ENCODE measurements at regions of chr20 and their contacts with region 1.

Region 1: DNA sequence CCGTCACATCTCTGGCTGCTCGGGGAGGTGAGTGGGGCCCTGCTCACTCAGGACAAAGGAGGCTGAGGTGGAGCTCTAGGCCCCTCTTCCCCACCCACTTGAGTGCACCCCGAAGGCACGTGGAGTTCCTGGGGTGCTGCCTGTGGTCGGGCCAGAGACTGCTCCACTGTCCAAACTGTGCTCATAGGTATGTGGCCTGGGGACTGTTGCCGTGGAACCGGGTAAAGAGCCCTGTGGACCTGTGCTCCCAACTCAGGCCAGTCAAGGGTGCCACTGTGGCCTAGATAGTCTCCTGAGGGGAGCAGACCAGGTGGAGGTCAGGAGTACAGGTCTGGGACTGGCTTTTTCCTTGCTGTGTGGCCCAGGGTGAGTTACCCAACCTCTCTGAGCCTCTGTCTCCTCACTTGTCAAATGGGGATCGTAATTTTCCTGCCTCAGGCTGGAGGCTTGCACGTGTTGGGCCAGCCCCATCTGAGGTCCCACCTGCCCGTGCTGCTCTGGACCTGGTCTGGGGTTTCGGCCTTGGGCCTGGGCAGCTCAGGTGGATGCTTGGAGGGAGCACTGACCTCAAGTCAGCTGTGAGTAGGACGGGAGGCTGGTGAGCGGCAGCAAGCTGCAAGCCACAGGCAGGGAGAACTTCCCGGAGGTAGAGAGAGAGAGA is 12.4 kb upstream of the NPBWR2 start:
- DNase-seq: no peak
- H3K4me3 Mint-ChIP-seq: peak overlapping the region; percentile 51
- H3K27ac Mint-ChIP-seq: peak overlapping the region; percentile 44
- H3K4me1 Mint-ChIP-seq: peaks cover 10% of the 10 kb centered on the region
- H3K27me3 Mint-ChIP-seq: peaks cover 13% of the 10 kb centered on the region

Region 2: DNA sequence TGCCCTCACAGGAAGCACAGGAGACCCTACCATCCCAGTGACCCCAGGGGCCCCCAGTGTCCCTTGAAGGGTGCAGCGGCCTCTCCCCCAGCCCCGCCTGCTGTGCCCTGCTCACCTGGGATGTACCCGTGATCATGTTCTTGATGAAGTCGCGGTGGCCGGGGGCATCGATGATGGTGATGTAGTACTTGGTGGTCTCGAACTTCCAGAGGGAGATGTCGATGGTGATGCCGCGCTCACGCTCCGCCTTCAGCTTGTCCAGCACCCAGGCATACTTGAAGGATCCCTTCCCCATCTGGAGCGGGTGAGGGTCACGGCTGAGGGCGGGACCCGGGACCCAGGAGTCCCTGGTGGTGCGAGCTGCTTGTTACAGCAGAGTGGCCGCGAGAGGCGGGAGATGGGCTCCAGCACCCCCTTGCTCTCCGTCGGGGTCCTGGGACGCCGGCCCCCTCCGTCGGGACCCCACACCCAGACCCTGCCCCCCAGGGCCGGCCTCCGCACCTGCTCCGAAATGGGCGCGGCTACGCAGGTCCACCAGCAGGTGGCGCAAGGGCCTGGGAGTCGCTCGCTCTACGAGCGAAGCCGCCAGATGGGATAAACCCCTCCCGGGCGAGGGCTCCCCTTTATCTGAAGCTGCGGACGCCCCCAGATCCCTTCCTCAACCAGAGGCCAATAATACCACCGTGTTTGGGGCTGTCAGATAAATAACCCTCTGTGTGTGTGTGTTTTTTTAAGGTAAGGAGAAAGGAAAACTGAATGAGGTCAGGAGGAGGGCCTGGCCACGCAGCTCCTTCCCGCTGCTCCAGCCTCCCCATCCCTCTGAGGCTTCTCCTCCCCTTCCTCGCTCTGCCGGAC is 623.8 kb before region 1 on chr20:
- intact Hi-C with region 1: loop called (anchors 1 kb)
- DNase-seq: peak; percentile 54
- H3K4me3 Mint-ChIP-seq: no peak overlapping the region
- H3K27ac Mint-ChIP-seq: no peak overlapping the region
- H3K4me1 Mint-ChIP-seq: no peaks in the 10 kb centered on the region
- H3K27me3 Mint-ChIP-seq: peaks cover 16% of the 10 kb centered on the region

Region 3: DNA sequence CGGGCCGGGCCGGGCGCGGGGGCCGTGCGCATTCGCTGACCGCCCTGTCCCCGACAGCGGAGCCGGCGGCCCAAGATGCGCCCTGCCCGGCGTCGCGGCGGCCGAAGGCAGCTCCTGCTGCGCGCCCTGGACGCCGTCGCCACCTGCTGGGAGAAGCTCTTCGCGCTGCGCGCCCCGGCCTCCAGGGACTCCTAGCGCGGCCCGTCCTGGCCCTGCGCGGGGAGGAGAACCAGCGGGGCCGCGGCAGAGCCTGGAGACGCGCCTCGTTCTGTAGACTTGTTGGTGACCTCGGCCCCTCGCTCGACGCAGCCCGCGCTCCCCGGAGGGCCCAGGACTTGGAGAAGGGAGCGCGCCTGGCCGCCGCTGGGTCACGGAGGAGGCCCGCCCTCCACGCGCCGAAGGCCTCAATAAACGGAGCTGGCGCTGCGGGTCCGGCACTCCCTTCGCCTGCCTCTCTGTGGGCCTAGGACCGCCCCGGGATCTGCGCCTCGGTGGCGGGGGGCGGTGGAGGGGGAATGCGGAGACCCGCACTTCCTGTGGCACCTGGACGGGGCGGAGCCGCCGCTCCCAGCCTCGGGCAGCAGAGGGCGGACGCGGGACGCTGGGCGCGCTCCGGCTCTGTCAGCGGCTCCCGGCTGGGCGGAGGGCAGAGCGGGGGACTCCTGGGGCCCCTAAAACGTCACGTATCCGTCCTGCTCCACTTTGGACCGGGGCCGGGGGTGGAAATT is 81.1 kb before region 1 on chr20:
- intact Hi-C with region 1: loop called (anchors 1 kb)
- DNase-seq: peak; percentile 77
- H3K4me3 Mint-ChIP-seq: peak overlapping the region; percentile 73
- H3K27ac Mint-ChIP-seq: no peak overlapping the region
- H3K4me1 Mint-ChIP-seq: peaks cover 51% of the 10 kb centered on the region
- H3K27me3 Mint-ChIP-seq: peaks cover 3% of the 10 kb centered on the region

Region 4: DNA sequence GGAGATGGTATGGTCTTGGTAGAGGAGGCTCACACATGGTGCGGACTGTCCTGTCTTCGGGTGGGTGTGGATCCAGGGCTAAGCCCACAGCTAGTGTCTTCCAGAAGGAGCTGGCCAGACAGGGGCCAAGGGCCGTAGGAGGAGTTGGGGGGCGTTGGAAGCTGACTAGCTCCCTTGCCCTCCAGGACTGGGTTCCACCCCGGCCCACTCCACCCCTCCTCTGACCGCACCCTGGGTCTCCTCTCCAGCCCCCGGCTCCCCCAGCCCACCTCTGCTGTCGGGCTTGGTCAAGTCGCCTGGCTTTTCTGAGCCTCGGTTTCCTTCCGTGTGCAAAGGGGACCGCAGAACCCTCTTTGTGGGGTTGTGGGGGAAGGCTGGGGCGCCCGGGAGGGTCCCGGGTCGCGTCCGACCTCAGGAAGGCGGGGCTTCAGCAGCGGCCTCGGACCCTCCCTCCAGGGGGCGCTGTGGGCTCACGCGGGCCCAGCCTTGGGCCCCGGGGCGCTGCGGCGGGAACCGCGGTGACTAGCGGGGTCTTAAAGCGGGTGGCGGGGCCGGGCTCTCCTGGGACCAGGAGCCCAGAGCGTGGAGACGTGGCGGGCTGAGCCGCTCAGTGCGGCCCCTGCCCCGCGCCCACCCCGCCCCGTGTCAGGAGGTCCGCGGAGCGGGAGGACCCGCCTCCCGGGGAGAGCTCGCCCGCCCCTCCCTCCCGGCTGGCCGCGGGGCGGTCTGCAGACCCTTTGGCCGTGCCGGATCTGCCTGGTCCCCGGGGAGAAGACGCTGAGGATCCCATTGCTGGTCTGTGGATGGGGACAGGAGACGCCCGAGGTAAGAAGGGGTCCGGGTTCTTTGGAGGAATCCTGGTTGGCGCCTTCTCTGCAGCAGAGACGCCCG is 17.8 kb before region 1 on chr20:
- intact Hi-C with region 1: loop called (anchors 1 kb)
- DNase-seq: peak; percentile 41
- H3K4me3 Mint-ChIP-seq: peak overlapping the region; percentile 40
- H3K27ac Mint-ChIP-seq: no peak overlapping the region
- H3K4me1 Mint-ChIP-seq: peaks cover 7% of the 10 kb centered on the region
- H3K27me3 Mint-ChIP-seq: peaks cover 21% of the 10 kb centered on the region

Measured in activated T-helper 1 cell treated with anti-CD3 and anti-CD28 coated beads, Interleukin-12 subunit alpha, Interleukin-12 subunit beta, Interleukin-2, Interleukin-4 antibody, amounts not matched to agents 30 ng/mL and 10 ng/mL and 1 ng/mL, durations not matched to agents 14 hours and 24 hours and 36 hours (primary cell).